ENCODE measurements at regions of chr11 and their contacts with region 1.

Region 1: GRCh38 chr11:130448416-130449309 is at the start of gene ADAMTS15:
- DNase-seq: peak; percentile 84
- ATAC-seq: peak; percentile 91
- H3K4me3 ChIP-seq: peak within 1 kb of the TSS; percentile 81
- H3K27ac ChIP-seq: peak within 1 kb of the TSS; percentile 57
- H3K4me1 ChIP-seq: peaks cover 9% of the 10 kb centered on the region
- H3K27me3 ChIP-seq: 0 out of 2 replicates have a peak, but pooled peaks cover 2% of the 10 kb centered on the region
- CTCF ChIP-seq: no peak
- POLR2A ChIP-seq: no peak
- RAD21 ChIP-seq: no peak
- total RNA-seq, gene ADAMTS15: 3.0 and 3.1 TPM in 2 replicates

Region 2: DNA sequence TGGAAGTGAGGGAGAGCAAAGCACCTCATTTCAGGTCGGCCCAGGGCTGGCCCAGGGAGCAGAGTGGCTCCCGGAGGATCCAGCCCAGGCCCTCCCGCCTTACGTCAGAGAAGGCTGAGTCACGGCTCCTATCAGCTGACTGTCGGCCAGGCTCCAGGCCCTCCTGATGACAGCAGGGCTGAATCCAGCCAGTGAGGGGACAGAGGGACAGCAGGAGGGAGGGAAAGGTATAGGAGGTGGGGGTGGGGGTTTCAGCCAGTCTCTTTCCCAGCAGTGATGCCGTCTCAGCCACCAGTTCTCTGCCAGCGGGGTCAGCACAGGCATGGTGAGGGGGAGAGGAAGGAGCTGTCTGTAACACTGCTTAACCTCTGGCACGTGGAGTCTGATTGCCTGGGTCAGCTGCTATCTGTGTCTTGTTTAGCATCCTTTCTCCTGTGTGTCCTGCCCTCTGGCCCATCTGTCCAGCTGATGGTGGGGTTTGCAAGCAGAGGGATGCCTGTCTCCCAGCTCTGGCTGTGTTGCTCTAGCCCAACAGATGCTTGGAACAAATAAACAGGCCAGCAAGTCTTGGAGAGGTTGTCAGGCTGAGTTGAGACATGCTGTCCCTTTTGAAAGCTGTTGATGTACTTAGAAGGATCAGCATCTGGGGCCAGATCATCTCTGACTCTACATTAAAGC is 73.8 kb after region 1 on chr11:
- CTCF ChIA-PET with region 1: interaction called, 3 read pairs
- POLR2A ChIA-PET with region 1: no interaction called
- dilution Hi-C with region 1: no loop called
- in situ Hi-C with region 1: no loop called
- intact Hi-C with region 1: loop called (anchors 1 kb)
- DNase-seq: peak; percentile 97
- ATAC-seq: peak; percentile 95
- H3K4me3 ChIP-seq: no peak overlapping the region
- H3K27ac ChIP-seq: peak overlapping the region; percentile 95
- H3K4me1 ChIP-seq: peaks cover 20% of the 10 kb centered on the region
- H3K27me3 ChIP-seq: no peaks in the 10 kb centered on the region
- CTCF ChIP-seq: no peak
- POLR2A ChIP-seq: peak; percentile 60
- RAD21 ChIP-seq: no peak; the same call in 1 of the 2 replicates

Region 3: DNA sequence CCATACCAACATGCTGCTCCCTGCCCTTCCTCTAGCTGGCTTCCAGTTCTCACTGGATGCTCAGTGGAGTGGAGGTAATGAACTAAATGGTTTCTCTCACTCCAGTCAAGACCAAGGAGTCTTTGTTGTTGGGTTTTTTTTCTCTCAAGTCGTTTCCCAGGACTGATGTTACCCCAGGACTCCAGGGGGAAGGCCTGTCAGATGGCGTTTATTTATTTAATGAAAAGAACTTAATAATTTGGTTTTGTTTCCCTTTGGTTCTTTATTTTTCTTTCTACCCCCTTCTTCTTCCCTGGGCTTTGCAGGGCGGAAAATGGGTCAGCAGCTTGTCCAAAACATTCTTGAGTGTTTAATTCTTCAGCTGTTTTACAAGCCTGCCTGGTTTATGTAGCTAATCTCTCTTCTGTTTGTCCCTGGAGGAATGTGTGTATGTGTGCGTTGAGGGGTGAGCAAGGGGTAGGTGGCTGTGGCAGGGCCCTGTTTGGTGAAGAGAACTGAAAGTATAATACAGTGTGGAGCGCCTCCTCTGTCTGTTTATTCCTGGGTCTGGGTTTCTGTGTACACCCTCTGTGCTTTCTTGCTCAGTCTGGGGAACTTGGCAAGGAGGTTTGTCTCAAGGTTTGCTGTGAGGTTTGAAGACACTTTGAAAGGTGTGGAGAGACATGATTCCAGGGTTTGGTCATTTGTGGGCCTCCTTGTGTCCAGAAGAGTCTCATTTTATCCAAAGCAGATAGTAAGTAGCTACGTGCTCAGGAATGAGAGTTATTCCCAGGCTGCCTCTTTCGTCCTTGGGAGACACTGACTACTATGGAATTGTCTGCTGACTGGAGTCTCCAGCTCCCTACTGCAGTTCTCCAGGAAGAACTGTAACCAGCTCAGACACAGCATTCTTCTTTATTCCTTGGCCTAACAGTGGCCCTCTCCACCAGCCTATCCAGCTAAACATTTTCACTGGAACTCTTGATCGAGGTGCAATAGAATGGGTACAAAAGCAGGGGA is 175.3 kb after region 1 on chr11:
- CTCF ChIA-PET with region 1: no interaction called
- POLR2A ChIA-PET with region 1: no interaction called
- dilution Hi-C with region 1: no loop called
- in situ Hi-C with region 1: no loop called
- intact Hi-C with region 1: loop called (anchors 5 kb)
- DNase-seq: peak; percentile 28
- ATAC-seq: peak; percentile 92
- H3K4me3 ChIP-seq: no peak overlapping the region
- H3K27ac ChIP-seq: peak overlapping the region; percentile 37; the same call in 1 of the 2 replicates
- H3K4me1 ChIP-seq: peaks cover 11% of the 10 kb centered on the region
- H3K27me3 ChIP-seq: no peaks in the 10 kb centered on the region
- CTCF ChIP-seq: no peak; the same call in 1 of the 2 replicates
- POLR2A ChIP-seq: no peak
- RAD21 ChIP-seq: peak; percentile 11; the same call in 1 of the 2 replicates

Region 4: GRCh38 chr11:130772266-130773227 is 323.9 kb after region 1 on chr11:
- CTCF ChIA-PET with region 1: no interaction called
- POLR2A ChIA-PET with region 1: no interaction called
- dilution Hi-C with region 1: no loop called
- in situ Hi-C with region 1: no loop called
- intact Hi-C with region 1: loop called (anchors 1 kb)
- DNase-seq: peak; percentile 97
- ATAC-seq: peak; percentile 89
- H3K4me3 ChIP-seq: no peak overlapping the region
- H3K27ac ChIP-seq: peak overlapping the region; percentile 77; the same call in 1 of the 2 replicates
- H3K4me1 ChIP-seq: peaks cover 22% of the 10 kb centered on the region
- H3K27me3 ChIP-seq: no peaks in the 10 kb centered on the region
- CTCF ChIP-seq: no peak
- POLR2A ChIP-seq: no peak
- RAD21 ChIP-seq: no peak; the same call in 1 of the 2 replicates

Region 5: GRCh38 chr11:130839981-130840666 is 391.5 kb after region 1 on chr11:
- CTCF ChIA-PET with region 1: no interaction called
- POLR2A ChIA-PET with region 1: no interaction called
- dilution Hi-C with region 1: no loop called
- in situ Hi-C with region 1: loop called (anchors 10 kb)
- intact Hi-C with region 1: loop called (anchors 5 kb)
- DNase-seq: peak; percentile 56
- ATAC-seq: peak; percentile 95
- H3K4me3 ChIP-seq: no peak overlapping the region
- H3K27ac ChIP-seq: peak overlapping the region; percentile 71; the same call in 1 of the 2 replicates
- H3K4me1 ChIP-seq: peaks cover 3% of the 10 kb centered on the region; the same call in 1 of the 2 replicates
- H3K27me3 ChIP-seq: no peaks in the 10 kb centered on the region
- CTCF ChIP-seq: no peak
- POLR2A ChIP-seq: no peak
- RAD21 ChIP-seq: no peak